ENCODE measurements at regions of chr17 and their contacts with region 1.

Region 1: DNA sequence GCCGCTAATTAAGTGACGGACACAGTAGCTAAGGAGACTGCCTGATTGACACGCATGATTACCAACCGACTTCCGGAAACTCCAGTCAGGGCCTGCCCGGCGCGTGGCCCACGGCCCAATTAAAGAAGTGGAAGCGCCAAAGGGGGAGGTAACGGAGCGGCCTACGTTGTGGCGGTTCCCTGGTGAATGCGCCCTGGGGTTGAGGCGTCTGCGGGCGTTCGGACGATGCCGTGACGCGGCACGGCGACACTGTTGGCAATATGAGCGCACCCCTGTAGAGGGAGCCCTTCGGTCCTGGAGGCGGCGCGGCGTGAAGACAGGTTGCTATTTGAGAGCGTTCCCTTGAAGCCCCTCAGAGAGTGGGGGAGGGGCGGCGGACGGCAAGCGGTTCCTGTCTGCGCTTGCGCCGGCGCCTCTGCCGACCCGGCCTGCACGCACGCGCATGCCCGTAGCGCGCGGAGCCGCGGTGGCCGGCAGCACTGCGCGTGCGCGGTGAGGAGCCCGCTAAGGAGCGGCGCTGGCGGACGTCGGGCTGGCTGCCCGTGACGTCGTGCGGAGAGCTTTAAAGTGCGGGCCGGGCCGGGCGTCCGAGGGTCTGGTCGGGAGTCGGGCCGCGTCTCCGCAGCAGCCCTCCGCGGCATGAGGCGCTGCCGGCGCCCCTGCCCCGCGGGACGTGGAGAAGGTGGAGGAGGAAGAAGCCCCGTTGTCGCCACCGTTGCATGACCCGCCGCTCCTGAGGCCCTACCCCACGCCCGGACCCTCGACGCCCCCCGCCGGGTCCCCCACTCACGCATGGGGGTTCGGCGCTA is at the start of gene ALKBH5:
- DNase-seq: peak; percentile 97 to 99 (median 98)
- ATAC-seq: peak; percentile 91 to 96 (median 94)
- H3K4me3 ChIP-seq: peak within 1 kb of the TSS; percentile 56 to 99 (median 92)
- H3K27ac ChIP-seq: peak within 1 kb of the TSS; percentile 93 to 100 (median 98)
- H3K4me1 ChIP-seq: peaks cover 13 to 66% (median 47%) of the 10 kb centered on the region in 12 donors
- H3K27me3 ChIP-seq: no peaks in the 10 kb centered on the region
- CTCF ChIP-seq: peak in 11 of 12 donors; percentile 2 to 50 (median 28)
- POLR2A ChIP-seq: peak in 1 of 2 donors; percentile 94
- total RNA-seq, gene ALKBH5: 147 to 233 (median 198) TPM

Region 2: GRCh38 chr17:18225121-18225566 is 41.6 kb after region 1 on chr17:
- intact Hi-C with region 1: loop called in 1 of 10 experiments (anchors 2 kb)
- DNase-seq: peak; percentile 97 to 99 (median 98)
- ATAC-seq: peak; percentile 90 to 98 (median 97)
- H3K4me3 ChIP-seq: peak overlapping the region in 11 of 12 donors; percentile 5 to 87 (median 58)
- H3K27ac ChIP-seq: peak overlapping the region in 10 of 12 donors; percentile 27 to 80 (median 70)
- H3K4me1 ChIP-seq: peaks cover 0 to 25% (median 15%) of the 10 kb centered on the region in 12 donors
- H3K27me3 ChIP-seq: no peaks in the 10 kb centered on the region
- CTCF ChIP-seq: no peak
- POLR2A ChIP-seq: no peak

Region 3: DNA sequence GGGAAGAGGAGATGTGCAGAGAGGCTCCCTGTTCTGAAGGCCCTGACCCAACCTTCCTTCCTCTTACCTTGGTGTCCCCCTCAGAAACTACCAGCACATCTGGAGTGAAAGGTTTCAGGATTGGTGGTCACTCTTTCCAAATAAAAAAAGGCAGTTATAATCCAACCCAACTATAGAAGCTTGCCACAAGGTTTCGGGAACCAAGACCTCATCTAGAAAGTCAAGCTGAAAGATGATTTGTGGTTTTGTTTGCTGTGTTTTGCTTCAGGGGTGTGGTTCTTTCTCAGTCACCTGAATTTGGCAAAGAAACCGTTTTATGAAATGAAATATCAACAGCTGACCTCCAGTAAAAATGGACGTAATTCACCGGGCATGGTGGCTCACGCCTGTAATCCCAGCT is 160.5 kb after region 1 on chr17:
- intact Hi-C with region 1: no loop called
- DNase-seq: no peak
- ATAC-seq: no peak
- H3K4me3 ChIP-seq: no peak overlapping the region
- H3K27ac ChIP-seq: no peak overlapping the region
- H3K4me1 ChIP-seq: no peaks in the 10 kb centered on the region
- H3K27me3 ChIP-seq: no peaks in the 10 kb centered on the region
- CTCF ChIP-seq: no peak
- POLR2A ChIP-seq: no peak